Aorta (tissue), 5 donors: ENCODE measurements at regions of chr1 and their contacts with region 1.

Region 1: DNA sequence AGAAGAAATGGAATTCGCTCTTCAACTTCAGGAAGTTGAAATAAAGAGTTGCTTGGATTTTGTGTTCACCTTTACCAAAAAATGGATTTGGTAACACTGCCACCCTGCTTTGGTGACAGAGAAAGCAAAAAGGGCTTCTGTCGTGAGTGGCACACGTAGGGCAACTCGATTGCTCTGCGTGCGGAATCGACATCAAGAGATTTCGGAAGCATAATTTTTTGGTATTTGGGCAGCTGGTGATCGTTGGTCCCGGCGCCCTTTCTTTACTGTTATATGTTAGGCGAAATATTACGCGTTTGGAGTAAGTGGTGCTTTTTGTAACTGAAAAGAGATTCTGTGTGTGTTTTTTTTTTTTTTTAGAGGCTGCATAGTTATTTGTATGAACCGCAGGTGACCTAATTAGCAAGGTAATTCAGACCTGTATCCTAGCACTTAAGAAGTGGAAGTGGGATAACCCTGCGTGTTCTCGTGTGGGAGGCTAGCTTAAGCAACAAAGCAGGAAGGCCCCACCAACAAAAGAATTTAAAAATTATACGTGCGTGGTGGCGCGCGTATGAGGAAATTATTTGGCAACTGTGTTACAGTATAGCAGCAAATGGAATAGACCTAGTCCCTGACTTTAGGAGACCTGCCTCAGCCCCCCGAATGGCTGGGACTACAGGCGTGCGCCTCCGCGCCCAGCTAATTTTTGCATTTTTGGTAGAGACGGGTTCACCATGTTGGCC is at the start of gene RNU11:
- DNase-seq: peak; percentile 86 to 92
- ATAC-seq: peak; percentile 93
- H3K4me3 ChIP-seq: peak within 1 kb of the TSS in 1 of 2 donors; percentile 44
- H3K27ac ChIP-seq: peak within 1 kb of the TSS; percentile 83 to 90
- H3K4me1 ChIP-seq: no peaks in the 10 kb centered on the region
- H3K27me3 ChIP-seq: no peaks in the 10 kb centered on the region
- total RNA-seq, gene RNU11: not detected

Region 2: DNA sequence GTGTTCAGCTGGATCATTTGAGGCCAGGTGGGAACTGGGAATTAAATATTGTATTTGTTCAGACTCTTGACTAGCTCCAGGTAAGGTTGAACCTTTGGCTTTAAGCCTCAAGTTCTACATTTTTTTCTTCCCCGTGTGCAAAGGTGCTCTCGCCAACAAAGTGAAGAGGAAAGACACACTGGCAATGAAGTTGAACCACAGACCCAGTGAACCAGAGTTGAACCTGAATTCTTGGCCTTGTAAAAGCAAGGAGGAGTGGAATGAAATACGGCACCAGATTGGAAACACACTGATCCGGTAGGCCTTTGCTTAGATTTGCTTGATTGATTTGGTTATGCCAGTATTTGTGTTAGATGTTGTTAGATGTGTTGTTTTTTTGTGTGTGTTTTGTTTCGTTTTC is 168.3 kb before region 1 on chr1:
- intact Hi-C with region 1: no loop called
- DNase-seq: no peak
- ATAC-seq: no peak
- H3K4me3 ChIP-seq: no peak overlapping the region
- H3K27ac ChIP-seq: no peak overlapping the region
- H3K4me1 ChIP-seq: no peaks in the 10 kb centered on the region
- H3K27me3 ChIP-seq: no peaks in the 10 kb centered on the region

Region 3: GRCh38 chr1:28668191-28668955 is 19.7 kb after region 1 on chr1 and contains the start of gene GMEB1:
- intact Hi-C with region 1: loop called in 1 of 2 experiments (anchors 1 kb)
- DNase-seq: peak; percentile 92 to 95
- ATAC-seq: peak; percentile 94
- H3K4me3 ChIP-seq: peak within 1 kb of the TSS; percentile 99 to 100
- H3K27ac ChIP-seq: peak within 1 kb of the TSS; percentile 97 to 99
- H3K4me1 ChIP-seq: no peaks in the 10 kb centered on the region
- H3K27me3 ChIP-seq: no peaks in the 10 kb centered on the region
- total RNA-seq, gene GMEB1: 11.1 to 11.9 TPM